ENCODE measurements at regions of chr10 and their contacts with region 1.

Region 1: DNA sequence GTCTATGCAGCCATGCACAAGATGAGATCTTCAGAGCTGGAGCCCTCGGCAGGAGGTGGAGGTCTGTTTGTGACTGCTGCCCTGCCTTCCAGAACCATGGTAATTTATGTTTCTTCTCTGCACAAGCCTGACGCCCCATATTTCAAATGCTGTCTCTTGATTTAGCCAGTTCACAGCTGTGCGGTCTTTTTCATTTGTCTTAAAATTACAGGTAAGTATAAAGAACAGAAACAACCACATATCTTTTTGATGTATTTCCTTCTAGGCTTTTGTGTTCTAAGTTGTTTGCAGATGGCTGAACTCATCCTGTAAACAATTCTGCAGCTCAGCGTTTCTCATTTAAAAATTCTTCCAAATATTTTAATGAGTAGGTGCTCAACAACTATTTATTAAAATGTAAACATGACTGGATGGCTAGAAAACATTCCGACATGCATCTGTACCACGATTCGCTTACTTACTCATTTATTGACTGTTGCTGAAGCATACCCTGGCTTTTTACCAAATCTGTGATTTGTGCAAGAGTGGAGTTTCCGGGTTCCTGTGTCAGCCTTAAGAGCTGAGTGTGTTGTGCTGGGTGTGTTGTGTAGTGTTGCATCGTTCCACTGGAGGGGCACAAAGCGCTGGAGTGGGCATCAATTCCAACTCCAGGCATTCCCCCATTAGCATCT is 58.9 kb downstream of the PIP4K2A start:
- DNase-seq: peak; percentile 55
- ATAC-seq: peak; percentile 21
- H3K4me3 Mint-ChIP-seq: peak overlapping the region; percentile 49
- H3K27ac Mint-ChIP-seq: peak overlapping the region; percentile 99
- H3K4me1 Mint-ChIP-seq: peaks cover 96% of the 10 kb centered on the region
- H3K27me3 Mint-ChIP-seq: no peaks in the 10 kb centered on the region
- CTCF ChIP-seq: no peak

Region 2: DNA sequence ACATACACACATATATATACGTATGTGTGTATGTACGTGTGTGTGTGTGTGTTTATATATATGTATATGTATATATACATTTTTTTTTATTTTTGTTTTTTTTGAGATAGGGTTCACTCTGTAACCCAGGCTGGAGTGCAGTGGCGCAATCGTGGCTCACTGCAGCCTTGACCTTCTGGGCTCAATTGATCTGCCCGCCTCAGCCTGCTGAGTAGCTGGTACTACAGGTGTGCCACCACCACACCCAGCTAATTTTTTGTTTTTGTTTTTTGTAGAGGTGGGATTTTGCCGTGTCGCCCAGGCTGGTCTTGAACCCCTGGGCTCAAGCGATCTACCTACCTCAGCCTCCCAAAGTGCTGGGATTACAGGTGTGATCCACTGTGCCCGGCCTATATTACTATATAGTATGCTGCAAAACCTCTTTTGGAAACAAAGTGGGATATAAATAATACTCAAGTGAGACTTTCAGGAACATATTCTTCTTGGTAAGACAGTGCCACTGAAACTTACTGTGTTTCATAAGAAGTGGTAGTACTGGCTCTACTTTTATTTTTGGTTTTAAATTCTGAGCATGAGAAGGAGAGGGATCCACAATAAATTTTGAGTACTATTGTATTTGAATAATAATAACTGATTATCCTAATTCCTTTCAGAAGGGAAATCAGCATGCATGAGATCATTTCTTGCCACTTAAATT is 1070.5 kb before region 1 on chr10:
- CTCF ChIA-PET with region 1: no interaction called
- POLR2A ChIA-PET with region 1: no interaction called
- intact Hi-C with region 1: no loop called
- DNase-seq: no peak
- ATAC-seq: no peak
- H3K4me3 Mint-ChIP-seq: peak overlapping the region; percentile 9
- H3K27ac Mint-ChIP-seq: peak overlapping the region; percentile 62
- H3K4me1 Mint-ChIP-seq: peaks cover 54% of the 10 kb centered on the region
- H3K27me3 Mint-ChIP-seq: no peaks in the 10 kb centered on the region
- CTCF ChIP-seq: no peak

Region 3: GRCh38 chr10:22630234-22631174 is 24.9 kb before region 1 on chr10:
- CTCF ChIA-PET with region 1: interaction called, 32 read pairs
- POLR2A ChIA-PET with region 1: interaction called, 48 read pairs
- intact Hi-C with region 1: no loop called
- DNase-seq: peak; percentile 64
- ATAC-seq: peak; percentile 76
- H3K4me3 Mint-ChIP-seq: peak overlapping the region; percentile 67
- H3K27ac Mint-ChIP-seq: peak overlapping the region; percentile 95
- H3K4me1 Mint-ChIP-seq: peaks cover 90% of the 10 kb centered on the region
- H3K27me3 Mint-ChIP-seq: no peaks in the 10 kb centered on the region
- CTCF ChIP-seq: no peak

Region 4: GRCh38 chr10:22676435-22676834 is 21.0 kb after region 1 on chr10:
- CTCF ChIA-PET with region 1: interaction called, 22 read pairs
- POLR2A ChIA-PET with region 1: interaction called, 35 read pairs
- intact Hi-C with region 1: no loop called
- DNase-seq: no peak
- ATAC-seq: peak; percentile 31
- H3K4me3 Mint-ChIP-seq: no peak overlapping the region
- H3K27ac Mint-ChIP-seq: peak overlapping the region; percentile 84
- H3K4me1 Mint-ChIP-seq: peaks cover 88% of the 10 kb centered on the region
- H3K27me3 Mint-ChIP-seq: no peaks in the 10 kb centered on the region
- CTCF ChIP-seq: no peak

Region 5: DNA sequence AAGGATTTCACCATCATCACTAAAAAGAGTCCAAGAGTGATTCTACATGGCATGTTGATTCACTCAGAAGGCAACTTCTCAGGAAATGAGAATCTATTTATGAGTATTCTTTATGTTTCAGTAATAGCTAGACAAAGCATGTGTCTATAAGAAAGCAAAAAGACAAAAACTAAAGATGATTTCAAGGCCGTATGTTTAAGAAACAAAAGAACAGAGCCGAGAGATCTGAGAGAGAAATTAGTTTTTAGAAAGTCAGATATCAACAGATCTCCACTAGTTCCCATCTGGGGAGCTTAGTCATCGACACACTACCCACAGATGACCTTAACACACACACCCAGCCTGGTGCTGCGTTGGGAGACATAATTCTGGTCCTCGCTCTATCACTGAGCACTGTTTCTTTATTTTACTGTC is 37.9 kb after region 1 on chr10:
- CTCF ChIA-PET with region 1: interaction called, 6 read pairs
- POLR2A ChIA-PET with region 1: interaction called, 4 read pairs
- intact Hi-C with region 1: loop called (anchors 5 kb)
- DNase-seq: peak; percentile 67
- ATAC-seq: peak; percentile 80
- H3K4me3 Mint-ChIP-seq: peak overlapping the region; percentile 59
- H3K27ac Mint-ChIP-seq: peak overlapping the region; percentile 86
- H3K4me1 Mint-ChIP-seq: peaks cover 89% of the 10 kb centered on the region
- H3K27me3 Mint-ChIP-seq: no peaks in the 10 kb centered on the region
- CTCF ChIP-seq: no peak

Measured in activated CD8-positive, alpha-beta T cell treated with anti-CD3 and anti-CD28 coated beads for 36 hours (primary cell).